Ovary (tissue), 10 donors: ENCODE measurements at regions of chr12 and their contacts with region 1.

Region 1: GRCh38 chr12:31659087-31659933 is at the start of gene ETFBKMT:
- DNase-seq: peak; percentile 79 to 88 (median 86)
- H3K4me3 ChIP-seq: peak within 1 kb of the TSS; percentile 70
- H3K27ac ChIP-seq: peak within 1 kb of the TSS; percentile 93 to 96
- H3K4me1 ChIP-seq: peaks cover 3% of the 10 kb centered on the region
- H3K27me3 ChIP-seq: no peaks in the 10 kb centered on the region
- CTCF ChIP-seq: peak; percentile 18 to 79 (median 53)
- EP300 ChIP-seq: no peak
- POLR2A ChIP-seq: peak; percentile 65
- total RNA-seq, gene ETFBKMT: 2.5 to 8.2 (median 6.2) TPM

Region 2: GRCh38 chr12:31431721-31432240 is 227.5 kb before region 1 on chr12:
- intact Hi-C with region 1: no loop called
- DNase-seq: peak in 1 of 5 donors; percentile 20
- H3K4me3 ChIP-seq: no peak overlapping the region
- H3K27ac ChIP-seq: peak overlapping the region in 1 of 2 donors; percentile 56
- H3K4me1 ChIP-seq: peaks cover 7% of the 10 kb centered on the region
- H3K27me3 ChIP-seq: no peaks in the 10 kb centered on the region
- CTCF ChIP-seq: no peak
- EP300 ChIP-seq: no peak
- POLR2A ChIP-seq: no peak

Region 3: GRCh38 chr12:31959161-31959700 is 299.9 kb after region 1 on chr12 and contains the start of gene RESF1:
- intact Hi-C with region 1: loop called in 1 of 4 experiments (anchors 10 kb)
- DNase-seq: peak; percentile 84 to 91 (median 87)
- H3K4me3 ChIP-seq: peak within 1 kb of the TSS; percentile 82
- H3K27ac ChIP-seq: peak within 1 kb of the TSS; percentile 76 to 83
- H3K4me1 ChIP-seq: peaks cover 7% of the 10 kb centered on the region
- H3K27me3 ChIP-seq: no peaks in the 10 kb centered on the region
- CTCF ChIP-seq: peak in 1 of 3 donors; percentile 9
- EP300 ChIP-seq: no peak
- POLR2A ChIP-seq: peak; percentile 52
- total RNA-seq, gene RESF1: 145 to 304 (median 157) TPM

Region 4: GRCh38 chr12:32032205-32032810 is 373.0 kb after region 1 on chr12:
- intact Hi-C with region 1: no loop called
- DNase-seq: no peak
- H3K4me3 ChIP-seq: no peak overlapping the region
- H3K27ac ChIP-seq: no peak overlapping the region
- H3K4me1 ChIP-seq: peaks cover 4% of the 10 kb centered on the region
- H3K27me3 ChIP-seq: no peaks in the 10 kb centered on the region
- CTCF ChIP-seq: no peak
- EP300 ChIP-seq: no peak
- POLR2A ChIP-seq: no peak

Region 5: DNA sequence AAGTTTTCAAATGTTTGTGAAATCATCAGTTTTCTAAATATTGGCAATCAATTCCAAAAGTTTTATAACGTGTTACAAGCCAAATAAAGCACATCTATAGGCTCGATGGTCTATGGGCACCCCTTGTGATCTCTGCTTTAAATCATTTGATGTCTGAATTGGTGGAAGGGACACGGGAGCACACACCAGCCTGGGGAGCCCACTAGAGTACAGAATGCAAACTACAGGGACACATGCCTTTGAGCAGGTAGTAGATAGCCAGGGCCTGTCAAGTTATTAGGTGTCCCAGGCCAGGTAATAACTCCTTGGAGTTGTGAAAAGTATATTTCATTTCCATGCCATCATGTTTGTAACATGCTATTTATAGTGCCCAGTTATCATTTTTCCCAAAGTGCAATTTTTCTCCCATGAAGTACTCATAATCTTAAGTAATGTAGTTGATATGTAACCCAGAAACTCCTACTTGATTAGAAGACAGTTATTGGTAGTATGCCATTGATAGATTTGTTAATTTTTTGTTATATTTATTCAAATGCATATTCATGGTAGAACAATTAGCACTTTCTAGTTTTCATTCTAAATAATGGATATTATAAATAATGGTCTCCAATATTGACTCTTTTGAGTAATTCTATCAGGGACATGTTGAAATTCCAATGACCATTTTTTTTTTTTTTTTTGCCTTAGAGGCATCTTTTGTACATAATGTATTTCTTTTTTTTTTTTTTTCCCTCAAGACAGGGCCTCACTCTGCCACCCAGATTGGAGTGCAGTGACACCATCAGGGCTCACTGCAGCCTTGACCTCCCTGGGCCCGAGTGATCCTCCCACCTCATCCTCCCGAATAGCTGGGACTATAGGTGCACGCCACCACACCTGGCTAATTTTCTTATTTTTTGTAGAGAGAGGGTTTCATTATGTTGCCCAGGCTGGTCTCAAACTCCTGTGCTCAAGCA is 643.2 kb after region 1 on chr12:
- intact Hi-C with region 1: loop called in 1 of 4 experiments (anchors 10 kb)
- DNase-seq: no peak
- H3K4me3 ChIP-seq: no peak overlapping the region
- H3K27ac ChIP-seq: no peak overlapping the region
- H3K4me1 ChIP-seq: peaks cover 3% of the 10 kb centered on the region
- H3K27me3 ChIP-seq: peaks cover 2% of the 10 kb centered on the region
- CTCF ChIP-seq: peak in 1 of 3 donors; percentile 31
- EP300 ChIP-seq: no peak
- POLR2A ChIP-seq: no peak

Region 6: DNA sequence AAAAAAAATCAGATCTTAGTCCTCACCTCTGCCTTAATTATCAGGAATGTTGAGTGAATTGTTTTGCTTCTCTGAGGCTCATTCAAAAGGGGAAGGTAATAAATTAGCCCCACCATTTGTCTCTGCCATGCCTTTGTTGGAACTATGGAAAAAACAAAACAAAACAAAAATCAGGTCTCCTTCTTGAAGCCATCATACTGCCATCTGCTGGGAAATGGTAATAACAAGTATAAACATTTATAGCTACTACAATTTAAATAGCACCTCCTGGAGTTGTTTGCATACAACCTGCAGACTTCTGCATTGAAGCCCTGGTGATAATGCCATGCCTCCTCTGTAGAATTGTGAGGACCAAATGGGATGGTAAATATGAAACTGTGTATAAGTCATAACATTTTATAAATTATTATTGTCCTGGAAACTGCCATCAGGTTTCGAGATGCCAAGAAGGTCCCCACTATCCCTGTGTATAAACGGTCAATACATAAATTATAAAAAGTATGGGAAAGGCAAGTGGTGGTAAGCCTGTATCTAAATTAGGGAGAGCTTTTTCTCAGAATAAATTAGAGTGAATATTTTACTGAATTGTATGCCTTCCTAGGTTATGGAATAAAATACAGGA is 652.9 kb after region 1 on chr12:
- intact Hi-C with region 1: loop called in 3 of 4 experiments (anchors 5 to 10 kb)
- DNase-seq: no peak
- H3K4me3 ChIP-seq: no peak overlapping the region
- H3K27ac ChIP-seq: no peak overlapping the region
- H3K4me1 ChIP-seq: peaks cover 5% of the 10 kb centered on the region
- H3K27me3 ChIP-seq: no peaks in the 10 kb centered on the region
- CTCF ChIP-seq: peak in 2 of 3 donors; percentile 51
- EP300 ChIP-seq: no peak
- POLR2A ChIP-seq: no peak

Region 7: GRCh38 chr12:32679091-32679919 is 1020.0 kb after region 1 on chr12 and contains the start of gene DNM1L:
- intact Hi-C with region 1: loop called in 2 of 4 experiments (anchors 10 kb)
- DNase-seq: peak; percentile 93 to 94 (median 94)
- H3K4me3 ChIP-seq: peak within 1 kb of the TSS; percentile 99
- H3K27ac ChIP-seq: peak within 1 kb of the TSS; percentile 76 to 90
- H3K4me1 ChIP-seq: no peaks in the 10 kb centered on the region
- H3K27me3 ChIP-seq: no peaks in the 10 kb centered on the region
- CTCF ChIP-seq: peak in 2 of 3 donors; percentile 25 to 45
- EP300 ChIP-seq: no peak
- POLR2A ChIP-seq: peak; percentile 66
- total RNA-seq, gene DNM1L: 46.7 to 77.5 (median 48.5) TPM

Region 8: DNA sequence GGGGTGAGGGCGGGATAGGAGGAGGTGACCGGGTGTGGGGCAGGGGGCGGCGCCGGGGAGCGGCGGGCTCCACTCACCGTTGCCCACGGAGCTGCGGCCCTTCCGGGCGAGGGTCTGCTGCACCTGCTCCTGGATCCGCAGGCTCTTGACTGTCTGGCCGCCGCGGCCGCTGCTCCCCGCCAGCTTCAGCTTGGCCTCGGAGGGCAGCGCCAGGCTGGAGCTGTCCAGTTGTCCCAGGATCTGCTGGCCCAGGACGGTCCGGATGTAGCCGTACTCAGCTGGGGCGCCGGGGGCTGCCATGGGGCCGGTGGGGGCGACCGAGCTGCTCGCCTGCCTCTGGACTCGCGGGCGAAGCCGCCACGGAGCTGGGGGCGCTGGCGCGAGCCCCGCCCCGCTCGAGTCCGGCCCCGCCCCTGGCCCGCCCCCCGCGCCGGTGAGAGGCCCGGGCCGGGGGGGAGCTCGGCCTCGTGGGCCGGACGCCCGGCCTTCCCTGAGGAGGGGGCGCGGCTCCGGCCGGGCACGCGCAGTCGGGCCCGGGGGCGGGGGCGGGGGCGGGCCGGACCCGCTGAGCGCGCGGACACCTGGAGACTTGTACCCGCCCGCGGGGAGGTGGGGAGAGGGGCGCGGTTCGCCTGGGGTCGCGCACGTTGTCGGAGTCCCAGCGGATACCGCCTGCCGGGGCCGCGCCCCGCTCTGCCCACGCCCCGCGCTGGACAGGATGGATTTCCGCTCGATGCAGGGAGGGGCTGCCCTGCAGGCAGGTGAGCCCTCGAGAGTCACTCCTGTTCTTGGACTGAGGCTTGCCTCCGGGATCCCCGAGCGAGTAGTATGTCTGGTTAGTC is 1237.3 kb after region 1 on chr12 and contains the start of gene PKP2:
- intact Hi-C with region 1: loop called in 1 of 4 experiments (anchors 10 kb)
- DNase-seq: peak; percentile 53 to 81 (median 70)
- H3K4me3 ChIP-seq: peak within 1 kb of the TSS; percentile 60
- H3K27ac ChIP-seq: peak within 1 kb of the TSS; percentile 59 to 83
- H3K4me1 ChIP-seq: peaks cover 2% of the 10 kb centered on the region
- H3K27me3 ChIP-seq: no peaks in the 10 kb centered on the region
- CTCF ChIP-seq: no peak
- EP300 ChIP-seq: no peak
- POLR2A ChIP-seq: no peak
- total RNA-seq, gene PKP2: 7.4 to 124 (median 30.9) TPM